Naive thymus-derived CD4-positive, alpha-beta T cell (primary cell): ENCODE measurements at regions of chr13 and their contacts with region 1.

Region 1: DNA sequence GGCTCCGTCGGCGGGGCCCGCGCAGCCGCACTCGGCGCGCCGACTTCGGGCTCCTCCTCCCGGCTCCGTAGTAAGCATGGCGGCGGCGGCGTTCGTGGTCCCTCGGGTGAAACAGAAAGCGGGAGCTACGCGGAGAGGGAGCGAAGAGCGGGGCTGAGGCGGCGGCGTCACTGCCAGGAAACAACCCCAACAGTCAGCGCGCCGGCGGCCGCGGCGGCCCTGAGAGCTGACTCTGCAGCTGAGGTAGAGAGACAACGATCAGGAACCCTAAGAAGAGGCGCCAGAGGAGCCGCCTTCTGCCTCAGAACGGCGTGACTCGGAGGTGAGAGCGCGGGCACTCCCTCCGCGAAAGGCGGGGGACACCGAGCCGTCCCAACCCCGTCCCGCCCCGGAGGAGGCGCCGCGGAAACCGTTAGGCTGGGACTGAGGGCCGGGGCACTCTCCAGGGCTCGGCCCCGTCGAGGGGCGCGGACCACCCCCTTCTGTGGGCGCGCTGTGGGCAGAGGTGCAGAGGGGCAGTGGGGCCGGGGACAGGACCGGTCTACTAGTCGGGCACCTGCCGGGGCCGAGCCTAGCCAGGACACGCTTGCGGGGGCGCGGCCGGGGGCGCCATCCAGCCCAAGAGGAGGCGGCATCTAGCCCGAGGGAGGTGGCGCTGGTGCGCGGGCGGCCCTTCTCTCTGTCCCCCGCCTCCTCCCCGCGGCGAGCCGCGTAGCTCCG is at the start of gene FNDC3A:
- DNase-seq: peak; percentile 84 to 90 (median 86)
- ATAC-seq: peak; percentile 87
- H3K4me3 ChIP-seq: peak within 1 kb of the TSS; percentile 82
- H3K4me3 Mint-ChIP-seq: peak within 1 kb of the TSS; percentile 92 to 100 (median 98)
- H3K27ac ChIP-seq: peak within 1 kb of the TSS; percentile 95
- H3K27ac Mint-ChIP-seq: peak within 1 kb of the TSS; percentile 93 to 99 (median 99)
- H3K4me1 ChIP-seq: peaks cover 13 to 28% of the 10 kb centered on the region in 2 donors
- H3K4me1 Mint-ChIP-seq: peaks cover 35 to 69% (median 49%) of the 10 kb centered on the region in 7 donors
- H3K27me3 ChIP-seq: no peaks in the 10 kb centered on the region
- H3K27me3 Mint-ChIP-seq: peaks cover 0 to 6% (median 0%) of the 10 kb centered on the region in 5 donors
- total RNA-seq, gene FNDC3A: 34.2 to 46.4 (median 39.1) TPM

Region 2: GRCh38 chr13:48037346-48038173 is 938.5 kb before region 1 on chr13 and contains the start of gene NUDT15:
- CTCF ChIA-PET with region 1: no interaction called
- POLR2A ChIA-PET with region 1: interaction called, 7 read pairs
- intact Hi-C with region 1: loop called in 1 of 2 experiments (anchors 1 kb)
- DNase-seq: peak; percentile 93 to 98 (median 97)
- ATAC-seq: peak; percentile 96
- H3K4me3 ChIP-seq: peak within 1 kb of the TSS; percentile 90
- H3K4me3 Mint-ChIP-seq: peak within 1 kb of the TSS; percentile 82 to 98 (median 95)
- H3K27ac ChIP-seq: peak within 1 kb of the TSS; percentile 91
- H3K27ac Mint-ChIP-seq: peak within 1 kb of the TSS; percentile 96 to 100 (median 97)
- H3K4me1 ChIP-seq: peaks cover 14 to 15% of the 10 kb centered on the region in 2 donors
- H3K4me1 Mint-ChIP-seq: peaks cover 15 to 52% (median 40%) of the 10 kb centered on the region in 7 donors
- H3K27me3 ChIP-seq: no peaks in the 10 kb centered on the region
- H3K27me3 Mint-ChIP-seq: no peaks in the 10 kb centered on the region
- total RNA-seq, gene NUDT15: 4.3 to 13.6 (median 8.7) TPM

Region 3: DNA sequence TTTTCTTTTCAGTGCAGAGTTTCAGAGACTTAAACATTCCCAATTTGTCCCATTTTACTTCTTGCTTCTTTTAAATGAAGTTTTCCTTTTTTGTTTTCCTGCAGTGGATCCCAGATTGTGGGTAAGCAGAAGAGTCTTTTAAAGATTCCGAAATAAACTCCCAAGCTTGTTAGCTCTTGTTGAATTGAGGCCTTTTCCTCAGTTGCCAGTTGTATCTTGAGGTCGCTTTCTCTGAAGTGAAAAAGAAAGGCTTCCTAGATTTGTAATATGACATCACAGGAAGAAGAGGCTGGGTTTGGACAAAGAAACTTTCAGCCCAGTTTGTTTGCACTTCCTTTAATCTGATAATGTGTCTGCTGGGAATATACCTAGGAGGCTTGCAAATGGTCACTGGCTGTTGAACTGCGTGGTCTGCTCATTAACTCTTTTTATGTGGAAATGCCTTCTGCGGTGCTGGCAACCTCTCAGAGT is 563.1 kb before region 1 on chr13 and contains the start of gene LPAR6:
- CTCF ChIA-PET with region 1: no interaction called
- POLR2A ChIA-PET with region 1: no interaction called
- intact Hi-C with region 1: loop called (anchors 5 kb)
- DNase-seq: peak in 7 of 9 donors; percentile 30 to 55 (median 47)
- ATAC-seq: peak; percentile 67
- H3K4me3 ChIP-seq: peak within 1 kb of the TSS; percentile 73
- H3K4me3 Mint-ChIP-seq: peak within 1 kb of the TSS; percentile 86 to 100 (median 98)
- H3K27ac ChIP-seq: peak within 1 kb of the TSS; percentile 90
- H3K27ac Mint-ChIP-seq: peak within 1 kb of the TSS; percentile 92 to 100 (median 94)
- H3K4me1 ChIP-seq: peaks cover 9 to 19% of the 10 kb centered on the region in 2 donors
- H3K4me1 Mint-ChIP-seq: peaks cover 19 to 47% (median 40%) of the 10 kb centered on the region in 7 donors
- H3K27me3 ChIP-seq: no peaks in the 10 kb centered on the region
- H3K27me3 Mint-ChIP-seq: no peaks in the 10 kb centered on the region
- total RNA-seq, gene LPAR6: 24.1 to 60.4 (median 32.8) TPM

Region 4: GRCh38 chr13:48804821-48805601 is 171.0 kb before region 1 on chr13:
- CTCF ChIA-PET with region 1: no interaction called
- POLR2A ChIA-PET with region 1: no interaction called
- intact Hi-C with region 1: loop called (anchors 2 to 5 kb)
- DNase-seq: peak in 1 of 9 donors; percentile 10
- ATAC-seq: no peak
- H3K4me3 ChIP-seq: no peak overlapping the region
- H3K4me3 Mint-ChIP-seq: peak overlapping the region in 8 of 10 donors; percentile 2 to 54 (median 10)
- H3K27ac ChIP-seq: peak overlapping the region; percentile 9
- H3K27ac Mint-ChIP-seq: peak overlapping the region in 8 of 9 donors; percentile 0 to 84 (median 58)
- H3K4me1 ChIP-seq: peaks cover 8 to 20% of the 10 kb centered on the region in 2 donors
- H3K4me1 Mint-ChIP-seq: peaks cover 15 to 32% (median 23%) of the 10 kb centered on the region in 7 donors
- H3K27me3 ChIP-seq: no peaks in the 10 kb centered on the region
- H3K27me3 Mint-ChIP-seq: peaks cover 0 to 2% (median 0%) of the 10 kb centered on the region in 5 donors

Region 5: DNA sequence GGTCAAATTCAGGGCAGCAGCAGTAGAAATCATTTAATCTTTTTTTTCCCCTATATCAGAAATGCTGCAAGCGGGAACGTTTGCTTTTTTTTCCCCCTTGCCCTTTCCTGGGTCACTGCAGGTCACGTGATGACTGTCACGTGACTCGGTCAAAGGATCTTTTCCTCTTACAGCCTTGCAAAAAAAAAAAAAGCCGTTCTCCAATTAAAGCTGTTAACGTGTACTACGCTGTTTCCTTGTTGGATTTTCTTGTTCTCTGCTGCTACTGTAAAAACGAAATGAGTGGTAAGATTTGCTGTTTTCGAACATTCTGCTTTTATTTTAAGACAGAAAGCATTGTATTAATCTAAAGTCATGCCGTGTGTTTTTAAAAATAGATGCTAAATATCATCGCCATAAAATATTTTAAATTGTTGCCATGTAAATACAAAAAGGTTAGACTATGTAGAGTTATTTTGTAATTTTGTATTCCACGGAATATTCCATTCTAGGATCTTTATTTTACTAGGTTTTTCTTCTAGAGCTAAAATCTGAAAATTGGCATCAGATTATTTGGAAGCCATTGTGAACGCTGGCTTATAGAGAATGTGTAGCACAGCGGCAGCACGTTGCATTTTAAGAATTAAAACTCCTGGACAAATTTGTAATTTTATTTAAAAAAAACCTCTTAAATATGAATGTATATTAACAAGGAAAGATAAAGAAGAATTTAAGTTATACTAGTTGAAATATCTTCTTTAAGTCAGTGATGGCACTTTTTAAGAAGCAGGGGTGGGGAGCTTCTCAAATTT is 134.3 kb after region 1 on chr13:
- CTCF ChIA-PET with region 1: no interaction called
- POLR2A ChIA-PET with region 1: interaction called, 17 read pairs
- intact Hi-C with region 1: loop called (anchors 1 kb)
- DNase-seq: peak; percentile 36 to 76 (median 68)
- ATAC-seq: peak; percentile 82
- H3K4me3 ChIP-seq: peak overlapping the region; percentile 75
- H3K4me3 Mint-ChIP-seq: peak overlapping the region; percentile 79 to 94 (median 90)
- H3K27ac ChIP-seq: peak overlapping the region; percentile 80
- H3K27ac Mint-ChIP-seq: peak overlapping the region; percentile 79 to 91 (median 90)
- H3K4me1 ChIP-seq: peaks cover 11 to 25% of the 10 kb centered on the region in 2 donors
- H3K4me1 Mint-ChIP-seq: peaks cover 16 to 48% (median 30%) of the 10 kb centered on the region in 7 donors
- H3K27me3 ChIP-seq: no peaks in the 10 kb centered on the region
- H3K27me3 Mint-ChIP-seq: no peaks in the 10 kb centered on the region

Region 6: DNA sequence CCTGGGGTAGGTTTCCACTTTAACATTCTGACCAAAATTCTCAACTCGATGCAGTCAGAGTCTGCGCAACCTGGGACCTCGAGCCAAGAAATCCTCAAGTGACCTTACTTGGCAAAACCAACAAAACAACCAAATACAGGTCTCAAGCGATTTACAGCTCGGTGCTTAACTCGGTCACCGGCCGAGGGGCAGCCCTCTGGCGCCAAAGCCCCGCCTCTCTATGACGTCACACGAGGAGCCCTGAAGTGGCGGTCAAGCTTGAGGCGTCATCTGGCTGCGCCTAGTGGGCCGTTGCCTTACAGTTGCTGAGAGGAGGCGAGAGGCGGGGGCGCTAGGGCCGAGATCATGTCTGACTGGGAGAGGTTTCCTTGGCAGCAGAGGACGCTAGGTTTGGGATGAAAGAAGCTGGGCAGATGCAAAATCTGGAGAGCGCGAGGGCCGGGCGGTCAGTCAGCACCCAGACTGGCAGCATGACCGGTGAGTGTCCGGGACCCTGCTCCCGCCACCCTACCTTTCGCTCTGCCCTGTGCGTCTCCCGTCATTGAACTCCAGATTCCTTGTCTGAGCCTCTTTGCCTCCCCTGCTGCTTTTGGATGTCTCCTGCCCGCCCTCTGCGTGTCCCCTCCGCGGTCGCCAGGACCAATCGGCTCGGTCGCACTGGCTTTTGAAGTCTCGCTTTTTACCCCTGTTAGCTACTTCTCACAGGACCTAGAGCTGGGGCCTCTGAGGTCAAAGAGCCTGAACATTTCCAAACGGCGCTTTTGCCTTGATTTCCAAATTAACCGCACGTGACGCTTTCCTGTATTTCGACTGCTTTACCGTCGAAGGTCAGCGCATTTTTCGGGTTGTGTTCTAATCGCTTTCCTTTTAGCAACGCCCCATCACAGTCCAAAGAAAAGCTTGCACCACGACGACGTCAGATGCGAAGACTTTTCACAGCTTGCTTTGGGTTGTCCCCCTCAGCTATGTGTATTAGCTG is 271.9 kb after region 1 on chr13 and contains the start of gene CDADC1:
- CTCF ChIA-PET with region 1: no interaction called
- POLR2A ChIA-PET with region 1: interaction called, 4 read pairs
- intact Hi-C with region 1: loop called in 1 of 2 experiments (anchors 2 kb)
- DNase-seq: peak; percentile 44 to 93 (median 54)
- ATAC-seq: peak; percentile 90
- H3K4me3 ChIP-seq: peak within 1 kb of the TSS; percentile 93
- H3K4me3 Mint-ChIP-seq: peak within 1 kb of the TSS; percentile 94 to 99 (median 98)
- H3K27ac ChIP-seq: peak within 1 kb of the TSS; percentile 75
- H3K27ac Mint-ChIP-seq: peak within 1 kb of the TSS; percentile 92 to 97 (median 95)
- H3K4me1 ChIP-seq: peaks cover 1 to 3% of the 10 kb centered on the region in 2 donors
- H3K4me1 Mint-ChIP-seq: peaks cover 16 to 59% (median 53%) of the 10 kb centered on the region in 7 donors
- H3K27me3 ChIP-seq: no peaks in the 10 kb centered on the region
- H3K27me3 Mint-ChIP-seq: peaks cover 0 to 25% (median 0%) of the 10 kb centered on the region in 5 donors
- total RNA-seq, gene CDADC1: 10.7 to 21.3 (median 14.5) TPM

Region 7: GRCh38 chr13:49690992-49691886 is 715.2 kb after region 1 on chr13 and contains the start of gene EBPL:
- CTCF ChIA-PET with region 1: no interaction called
- POLR2A ChIA-PET with region 1: no interaction called
- intact Hi-C with region 1: loop called in 1 of 2 experiments (anchors 5 kb)
- DNase-seq: peak; percentile 57 to 91 (median 73)
- ATAC-seq: peak; percentile 97
- H3K4me3 ChIP-seq: peak within 1 kb of the TSS; percentile 67
- H3K4me3 Mint-ChIP-seq: peak within 1 kb of the TSS; percentile 88 to 96 (median 92)
- H3K27ac ChIP-seq: peak within 1 kb of the TSS; percentile 56
- H3K27ac Mint-ChIP-seq: peak within 1 kb of the TSS; percentile 73 to 91 (median 81)
- H3K4me1 ChIP-seq: peaks cover 0 to 17% of the 10 kb centered on the region in 2 donors
- H3K4me1 Mint-ChIP-seq: peaks cover 21 to 58% (median 45%) of the 10 kb centered on the region in 7 donors
- H3K27me3 ChIP-seq: no peaks in the 10 kb centered on the region
- H3K27me3 Mint-ChIP-seq: no peaks in the 10 kb centered on the region
- total RNA-seq, gene EBPL: 13.3 to 34.9 (median 20.4) TPM